ENCODE measurements at regions of chr22 and their contacts with region 1.

Region 1: DNA sequence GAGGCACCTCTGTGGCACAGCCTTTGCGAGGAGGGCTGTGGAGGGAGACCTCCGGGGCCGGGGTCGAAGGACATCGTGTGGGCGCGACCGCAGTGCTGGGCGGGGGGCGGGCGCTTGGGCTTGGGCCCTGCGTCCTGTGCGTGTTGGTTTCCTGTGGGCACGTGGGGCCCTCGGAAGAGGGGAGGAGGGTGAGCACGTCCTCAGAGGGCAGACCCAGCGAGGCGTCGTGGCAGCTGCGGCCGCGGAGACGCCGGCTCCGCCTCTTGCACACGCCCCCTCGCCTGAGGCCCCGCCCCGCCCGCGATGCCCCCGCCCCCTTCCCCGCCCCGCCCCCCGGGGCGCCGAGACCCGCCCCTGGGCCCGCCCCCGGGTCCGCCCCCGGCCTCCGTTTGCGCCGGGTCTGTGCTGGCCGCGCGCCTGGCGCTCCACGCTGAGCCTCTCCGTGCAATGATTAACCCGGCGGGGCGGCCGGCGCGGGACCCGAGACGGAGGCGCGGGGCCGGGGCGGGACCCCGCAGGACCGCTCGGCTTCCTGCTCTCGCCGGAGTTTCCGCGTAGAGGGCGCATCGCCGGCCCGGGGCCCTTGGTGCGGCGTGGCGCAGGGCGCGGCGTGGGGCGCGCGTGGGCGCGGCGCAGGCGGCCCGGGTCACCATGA is at the start of gene PRR5:
- DNase-seq: no peak
- ATAC-seq: peak; percentile 88
- H3K4me3 ChIP-seq: peak within 1 kb of the TSS; percentile 50; the same call in 1 of the 2 replicates
- H3K27ac ChIP-seq: no peak within 1 kb of the TSS
- H3K4me1 ChIP-seq: no peaks in the 10 kb centered on the region; the same call in none of the 2 replicates
- H3K27me3 ChIP-seq: peaks cover 0 to 8% of the 10 kb centered on the region in 2 experiments; a peak in 1 of 4 replicates
- CTCF ChIP-seq: no peak
- EP300 ChIP-seq: no peak
- POLR2A ChIP-seq: peak; percentile 42; the same call in 1 of the 2 replicates
- RAD21 ChIP-seq: no peak
- polyA plus RNA-seq, gene PRR5: 0.03 to 0.13 TPM

Region 2: DNA sequence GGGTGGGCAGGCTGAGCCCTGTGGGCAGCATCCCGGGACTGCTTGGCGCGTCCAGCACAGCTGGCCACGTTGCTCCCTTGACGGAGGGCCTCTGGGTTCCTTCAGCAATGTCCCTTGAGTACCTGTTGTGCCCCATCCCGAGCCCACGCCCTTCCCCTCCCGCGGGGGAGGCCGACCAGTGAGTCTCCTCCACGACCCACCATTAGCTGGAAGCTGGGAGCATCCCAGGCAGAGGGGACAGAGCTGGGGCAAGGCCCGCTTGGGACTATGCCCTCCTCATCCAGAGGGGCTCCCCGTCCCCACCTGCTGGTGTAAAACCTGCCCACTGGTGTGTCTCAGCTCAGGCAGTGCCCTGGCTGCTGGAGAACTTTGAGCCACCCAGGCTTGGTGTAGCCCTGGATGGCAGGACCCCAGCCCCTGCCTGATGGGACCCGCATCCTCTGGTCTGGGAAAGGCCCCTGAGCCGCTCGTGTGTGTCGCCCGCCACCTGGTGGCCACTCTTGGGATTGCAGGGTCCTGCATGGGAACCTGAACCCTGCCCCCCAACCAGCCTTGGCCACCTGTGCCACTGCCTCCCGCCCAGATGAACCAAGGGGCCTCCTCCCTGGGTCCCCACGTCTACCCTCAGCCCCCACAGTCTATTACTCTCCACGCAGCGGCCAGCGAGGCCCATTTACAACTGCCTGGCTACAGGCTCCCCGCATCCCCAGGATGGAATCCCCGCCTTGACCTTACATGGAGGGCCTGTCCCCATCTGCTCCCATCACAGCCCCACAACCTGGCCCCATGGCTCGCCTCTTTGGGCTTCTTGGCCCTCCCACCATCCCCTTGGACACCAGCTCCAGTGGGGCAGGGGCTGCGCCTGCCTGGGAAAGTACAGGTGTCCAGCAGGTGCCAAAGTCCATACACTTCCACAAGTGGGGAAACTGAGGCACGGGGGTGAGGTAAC is 33.9 kb after region 1 on chr22:
- CTCF ChIA-PET with region 1: interaction called, 45 read pairs
- POLR2A ChIA-PET with region 1: no interaction called
- RAD21 ChIA-PET with region 1: interaction called, 6 read pairs
- SMC1A ChIA-PET with region 1: interaction called, 7 read pairs
- in situ Hi-C with region 1: loop called (anchors 5 kb)
- intact Hi-C with region 1: loop called (anchors 1 kb)
- DNase-seq: no peak
- ATAC-seq: peak; percentile 90
- H3K4me3 ChIP-seq: no peak overlapping the region
- H3K27ac ChIP-seq: no peak overlapping the region
- H3K4me1 ChIP-seq: no peaks in the 10 kb centered on the region
- H3K27me3 ChIP-seq: no peaks in the 10 kb centered on the region
- CTCF ChIP-seq: peak; percentile 92 to 98 (median 96)
- EP300 ChIP-seq: no peak
- POLR2A ChIP-seq: no peak
- RAD21 ChIP-seq: peak; percentile 90

Region 3: DNA sequence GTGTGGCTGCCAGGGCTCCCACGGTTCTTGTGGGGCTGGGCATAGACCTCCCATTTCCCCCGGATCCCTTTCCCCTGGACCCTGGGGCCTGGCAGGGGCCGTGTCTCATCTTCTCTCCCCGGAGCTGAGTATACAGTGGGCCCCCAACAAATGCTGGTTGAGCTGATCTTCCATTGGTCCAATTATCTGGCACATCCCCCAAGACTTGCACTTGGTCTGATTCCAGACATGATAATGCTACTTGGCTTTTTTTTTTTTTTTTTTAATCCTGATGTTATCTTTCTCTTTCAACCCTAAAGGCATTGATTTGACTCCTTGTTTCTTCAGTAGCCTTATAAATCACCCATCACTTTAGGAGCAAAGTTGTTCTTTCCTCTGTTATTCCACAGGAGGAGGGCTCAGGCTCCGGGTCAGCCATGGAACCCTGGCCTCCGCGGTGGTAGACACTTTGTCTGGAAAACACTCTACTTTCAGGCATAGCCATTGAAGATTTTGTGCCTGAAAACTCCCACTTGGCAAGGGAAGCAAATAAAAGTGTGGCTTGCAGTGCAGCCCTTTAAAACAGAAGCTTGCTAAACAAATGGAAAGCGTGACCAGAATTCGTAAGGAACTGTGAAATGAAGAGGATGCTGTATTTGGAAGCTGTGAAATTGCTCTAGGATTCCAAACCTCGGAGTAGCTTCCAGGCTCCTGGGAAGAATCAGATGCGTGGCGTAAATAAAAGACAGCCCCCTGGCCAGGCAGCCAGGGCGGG is 95.2 kb after region 1 on chr22:
- CTCF ChIA-PET with region 1: no interaction called
- POLR2A ChIA-PET with region 1: no interaction called
- RAD21 ChIA-PET with region 1: no interaction called
- SMC1A ChIA-PET with region 1: no interaction called
- in situ Hi-C with region 1: no loop called
- intact Hi-C with region 1: no loop called
- DNase-seq: no peak
- ATAC-seq: no peak
- H3K4me3 ChIP-seq: no peak overlapping the region
- H3K27ac ChIP-seq: no peak overlapping the region
- H3K4me1 ChIP-seq: no peaks in the 10 kb centered on the region; the same call in 1 of the 2 replicates
- H3K27me3 ChIP-seq: no peaks in the 10 kb centered on the region; a peak in 1 of 4 replicates
- CTCF ChIP-seq: no peak
- EP300 ChIP-seq: no peak
- POLR2A ChIP-seq: no peak
- RAD21 ChIP-seq: no peak